Esophagus muscularis mucosa (tissue), 4 donors: ENCODE measurements at regions of chr3 and their contacts with region 1.

Region 1: DNA sequence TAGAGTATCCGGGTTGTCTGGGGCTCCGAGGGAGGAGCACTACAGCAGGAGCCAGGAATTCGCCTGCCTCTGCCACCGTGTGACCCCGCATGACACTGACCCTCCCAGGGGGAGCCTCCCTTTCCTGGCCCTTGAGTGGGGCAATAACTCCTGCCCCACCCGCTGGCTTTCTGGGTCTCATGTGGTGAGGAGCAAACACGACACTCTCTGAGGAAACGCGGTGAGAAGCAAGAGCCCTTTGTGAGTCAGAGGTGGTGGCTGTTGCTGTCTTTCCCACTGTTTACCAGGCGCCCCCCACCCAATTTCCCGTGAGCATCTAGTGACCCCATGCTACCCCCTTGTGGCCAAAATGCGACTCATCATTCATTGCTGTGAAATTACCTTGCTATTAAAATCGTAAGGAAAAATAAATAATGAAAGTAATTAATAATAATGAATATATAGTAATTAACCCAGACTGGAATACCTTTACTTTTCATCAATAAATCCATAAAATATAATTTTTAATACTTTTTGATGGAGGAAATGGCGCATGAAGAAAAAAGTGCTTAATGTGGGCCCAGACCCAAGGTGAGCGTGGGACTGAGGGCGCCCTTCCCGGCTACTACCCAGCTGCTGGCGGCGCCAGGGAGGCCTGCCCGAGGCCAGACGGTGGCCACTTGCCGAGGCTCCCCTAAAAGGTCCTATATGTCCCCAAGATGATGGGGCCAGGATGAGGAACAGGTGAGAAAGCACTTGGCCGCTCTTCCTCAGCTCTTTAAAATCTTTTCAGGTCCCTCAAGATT is 29.3 kb downstream of the CCNL1 start:
- DNase-seq: no peak
- H3K4me3 ChIP-seq: peak overlapping the region; percentile 18 to 36 (median 34)
- H3K27ac ChIP-seq: peak overlapping the region; percentile 64 to 74 (median 72)
- H3K4me1 ChIP-seq: peaks cover 44 to 60% (median 54%) of the 10 kb centered on the region in 4 donors
- H3K27me3 ChIP-seq: no peaks in the 10 kb centered on the region
- CTCF ChIP-seq: peak; percentile 58 to 63 (median 59)
- EP300 ChIP-seq: no peak
- POLR2A ChIP-seq: no peak

Region 2: DNA sequence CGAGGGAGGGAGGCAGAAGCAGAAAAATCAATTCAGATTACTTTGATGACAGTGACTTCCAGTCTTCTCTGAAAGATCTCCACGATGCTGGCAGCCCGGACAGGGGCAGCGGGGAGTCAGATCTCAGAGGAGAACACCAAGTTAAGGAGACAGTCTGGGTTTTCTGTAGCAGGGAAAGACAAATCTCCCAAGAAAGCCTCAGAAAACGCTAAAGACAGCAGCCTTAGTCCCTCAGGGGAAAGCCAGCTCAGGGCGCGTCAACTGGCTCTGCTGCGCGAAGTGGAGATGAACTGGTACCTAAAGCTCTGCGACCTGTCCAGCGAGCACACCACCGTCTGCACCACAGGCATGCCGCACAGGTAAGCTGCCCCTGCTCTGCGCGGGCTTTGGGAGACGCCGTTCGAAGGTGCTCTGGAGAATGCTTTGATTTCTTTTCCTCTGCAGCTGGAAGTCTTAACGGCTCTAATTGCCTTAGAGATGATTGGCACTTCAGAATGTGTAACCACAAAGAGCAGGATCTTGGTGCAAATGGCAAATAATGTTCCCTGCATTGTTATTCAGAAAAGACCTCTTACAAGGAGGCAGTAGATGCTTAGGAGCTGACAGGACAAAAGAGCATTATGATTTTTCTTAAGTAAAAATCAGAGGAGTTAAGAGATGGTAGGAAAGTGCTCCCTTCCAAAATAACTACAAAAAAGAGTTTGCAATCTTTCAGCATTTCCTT is 1010.0 kb before region 1 on chr3 and contains the start of gene KCNAB1:
- intact Hi-C with region 1: no loop called
- DNase-seq: peak; percentile 90
- H3K4me3 ChIP-seq: peak within 1 kb of the TSS in 1 of 4 donors; percentile 5
- H3K27ac ChIP-seq: no peak within 1 kb of the TSS
- H3K4me1 ChIP-seq: no peaks in the 10 kb centered on the region
- H3K27me3 ChIP-seq: no peaks in the 10 kb centered on the region
- CTCF ChIP-seq: no peak
- EP300 ChIP-seq: no peak
- POLR2A ChIP-seq: no peak
- total RNA-seq, gene KCNAB1: 0.83 to 5.9 (median 2.3) TPM

Region 3: GRCh38 chr3:156964577-156964976 is 166.1 kb before region 1 on chr3:
- intact Hi-C with region 1: no loop called
- DNase-seq: no peak
- H3K4me3 ChIP-seq: no peak overlapping the region
- H3K27ac ChIP-seq: no peak overlapping the region
- H3K4me1 ChIP-seq: no peaks in the 10 kb centered on the region
- H3K27me3 ChIP-seq: no peaks in the 10 kb centered on the region
- CTCF ChIP-seq: no peak
- EP300 ChIP-seq: no peak
- POLR2A ChIP-seq: no peak

Region 4: DNA sequence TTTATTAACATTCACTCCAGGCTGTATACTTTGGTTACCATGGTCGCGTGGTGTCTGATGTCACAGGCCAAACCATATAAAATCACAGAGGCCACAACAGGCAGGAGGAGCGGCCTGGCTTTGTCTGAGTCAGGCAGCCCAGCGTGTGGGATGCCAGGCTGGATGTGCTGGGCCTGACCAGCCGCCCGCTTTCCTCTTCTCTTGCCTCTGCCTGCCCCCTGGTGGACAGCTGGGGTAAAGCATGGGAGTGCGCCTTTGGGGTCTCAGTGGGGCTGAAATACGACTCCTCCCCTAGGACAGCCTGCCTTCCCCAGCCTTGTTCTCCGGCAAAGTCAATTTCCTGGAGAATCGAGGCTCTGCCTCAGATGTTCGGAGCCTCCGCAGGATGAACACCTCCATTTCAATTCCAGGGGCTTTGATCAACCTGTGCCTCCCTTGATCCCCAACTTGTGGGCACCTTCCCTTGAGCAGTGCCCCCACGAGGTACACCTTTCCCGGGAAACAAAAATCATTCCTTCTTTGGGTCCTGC is 48.9 kb before region 1 on chr3:
- intact Hi-C with region 1: loop called (anchors 2 kb)
- DNase-seq: peak; percentile 95
- H3K4me3 ChIP-seq: peak overlapping the region in 1 of 4 donors; percentile 4
- H3K27ac ChIP-seq: peak overlapping the region in 3 of 4 donors; percentile 8 to 42 (median 36)
- H3K4me1 ChIP-seq: peaks cover 8 to 29% (median 24%) of the 10 kb centered on the region in 4 donors
- H3K27me3 ChIP-seq: no peaks in the 10 kb centered on the region
- CTCF ChIP-seq: peak in 2 of 3 experiments; percentile 96 to 97
- EP300 ChIP-seq: no peak
- POLR2A ChIP-seq: no peak